ENCODE measurements at regions of chr20 and their contacts with region 1.

Region 1: DNA sequence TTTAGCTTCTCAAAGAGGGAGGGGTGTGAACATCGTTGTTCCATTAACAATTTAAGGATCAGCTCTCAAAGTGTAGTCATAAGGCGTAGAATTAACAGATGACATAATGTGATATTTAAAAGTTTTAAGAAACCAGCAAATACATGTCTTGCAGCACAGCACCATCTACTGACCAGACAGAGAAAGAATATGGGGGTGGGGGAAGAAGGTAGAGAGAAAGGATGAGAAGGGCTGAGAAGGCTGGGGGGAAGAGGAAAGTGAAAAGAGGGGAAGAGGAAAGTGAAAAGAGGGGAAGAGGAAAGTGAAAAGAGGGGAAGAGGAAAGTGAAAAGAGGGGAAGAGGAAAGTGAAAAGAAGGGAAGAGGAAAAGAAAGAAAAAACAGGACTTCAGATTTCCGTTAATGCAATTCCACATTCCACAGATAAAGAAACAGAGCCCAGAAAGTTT is 80.9 kb downstream of the HAO1 start:
- DNase-seq: no peak
- H3K4me3 ChIP-seq: no peak overlapping the region
- CTCF ChIP-seq: peak; percentile 65

Region 2: GRCh38 chr20:6828794-6829423 is 1030.5 kb before region 1 on chr20:
- CTCF ChIA-PET with region 1: interaction called, 48 read pairs
- POLR2A ChIA-PET with region 1: no interaction called
- DNase-seq: no peak
- H3K4me3 ChIP-seq: no peak overlapping the region
- CTCF ChIP-seq: peak; percentile 63

Region 3: GRCh38 chr20:7723284-7723683 is 136.1 kb before region 1 on chr20:
- CTCF ChIA-PET with region 1: no interaction called
- POLR2A ChIA-PET with region 1: no interaction called
- DNase-seq: no peak
- H3K4me3 ChIP-seq: no peak overlapping the region
- CTCF ChIP-seq: no peak

Region 4: GRCh38 chr20:7841971-7842310 is 17.4 kb before region 1 on chr20:
- CTCF ChIA-PET with region 1: interaction called, 13 read pairs
- POLR2A ChIA-PET with region 1: no interaction called
- DNase-seq: peak; percentile 61
- H3K4me3 ChIP-seq: no peak overlapping the region
- CTCF ChIP-seq: no peak

Region 5: GRCh38 chr20:8223091-8223870 is 363.9 kb after region 1 on chr20:
- CTCF ChIA-PET with region 1: no interaction called
- POLR2A ChIA-PET with region 1: no interaction called
- DNase-seq: peak; percentile 91
- H3K4me3 ChIP-seq: no peak overlapping the region
- CTCF ChIP-seq: no peak